ENCODE measurements at regions of chr13 and their contacts with region 1.

Region 1: GRCh38 chr13:107650081-107650701 is 565.1 kb downstream of the LIG4 start:
- DNase-seq: peak; percentile 64 to 76
- H3K4me3 ChIP-seq: no peak overlapping the region
- H3K4me3 Mint-ChIP-seq: no peak overlapping the region
- H3K27ac Mint-ChIP-seq: no peak overlapping the region
- H3K4me1 ChIP-seq: no peaks in the 10 kb centered on the region
- H3K4me1 Mint-ChIP-seq: no peaks in the 10 kb centered on the region
- H3K27me3 ChIP-seq: no peaks in the 10 kb centered on the region
- H3K27me3 Mint-ChIP-seq: peaks cover 14% of the 10 kb centered on the region
- CTCF ChIP-seq: peak; percentile 92 to 99

Region 2: GRCh38 chr13:107373551-107373950 is 276.6 kb before region 1 on chr13:
- CTCF ChIA-PET with region 1: no interaction called
- POLR2A ChIA-PET with region 1: no interaction called
- intact Hi-C with region 1: loop called (anchors 2 kb)
- DNase-seq: peak in 1 of 2 experiments; percentile 11
- H3K4me3 ChIP-seq: no peak overlapping the region
- H3K4me3 Mint-ChIP-seq: no peak overlapping the region
- H3K27ac Mint-ChIP-seq: no peak overlapping the region
- H3K4me1 ChIP-seq: no peaks in the 10 kb centered on the region
- H3K4me1 Mint-ChIP-seq: no peaks in the 10 kb centered on the region
- H3K27me3 ChIP-seq: no peaks in the 10 kb centered on the region
- H3K27me3 Mint-ChIP-seq: peaks cover 14% of the 10 kb centered on the region
- CTCF ChIP-seq: peak; percentile 44 to 74

Region 3: DNA sequence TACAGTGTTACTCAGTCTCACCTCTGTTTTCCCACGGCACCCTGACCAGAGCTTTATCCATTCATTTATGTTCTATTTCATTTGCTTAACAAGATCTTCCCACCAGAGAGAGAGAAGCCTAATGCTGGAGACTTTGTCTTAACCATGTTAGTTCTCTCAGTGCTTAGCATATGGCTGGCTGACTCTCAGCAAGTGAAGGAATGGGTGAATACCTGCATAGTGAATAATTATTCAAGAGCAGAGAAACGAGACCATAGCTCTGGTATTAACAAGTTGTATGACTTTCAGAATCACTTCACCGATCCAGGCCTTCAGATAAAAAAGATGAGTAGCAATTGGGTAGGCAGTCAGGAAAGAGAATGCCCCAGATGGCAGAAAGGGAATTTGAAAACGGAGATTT is 121.2 kb before region 1 on chr13:
- CTCF ChIA-PET with region 1: no interaction called
- POLR2A ChIA-PET with region 1: no interaction called
- intact Hi-C with region 1: no loop called
- DNase-seq: no peak
- H3K4me3 ChIP-seq: no peak overlapping the region
- H3K4me3 Mint-ChIP-seq: no peak overlapping the region
- H3K27ac Mint-ChIP-seq: no peak overlapping the region
- H3K4me1 ChIP-seq: no peaks in the 10 kb centered on the region
- H3K4me1 Mint-ChIP-seq: no peaks in the 10 kb centered on the region
- H3K27me3 ChIP-seq: no peaks in the 10 kb centered on the region
- H3K27me3 Mint-ChIP-seq: peaks cover 3% of the 10 kb centered on the region
- CTCF ChIP-seq: no peak

Region 4: GRCh38 chr13:107600971-107601370 is 49.2 kb before region 1 on chr13:
- CTCF ChIA-PET with region 1: no interaction called
- POLR2A ChIA-PET with region 1: no interaction called
- intact Hi-C with region 1: no loop called
- DNase-seq: no peak
- H3K4me3 ChIP-seq: no peak overlapping the region
- H3K4me3 Mint-ChIP-seq: no peak overlapping the region
- H3K27ac Mint-ChIP-seq: no peak overlapping the region
- H3K4me1 ChIP-seq: no peaks in the 10 kb centered on the region
- H3K4me1 Mint-ChIP-seq: no peaks in the 10 kb centered on the region
- H3K27me3 ChIP-seq: no peaks in the 10 kb centered on the region; the same call in 1 of the 2 replicates
- H3K27me3 Mint-ChIP-seq: peaks cover 9% of the 10 kb centered on the region
- CTCF ChIP-seq: no peak

Region 5: GRCh38 chr13:107617527-107617926 is 32.7 kb before region 1 on chr13:
- CTCF ChIA-PET with region 1: no interaction called
- POLR2A ChIA-PET with region 1: no interaction called
- intact Hi-C with region 1: no loop called
- DNase-seq: no peak
- H3K4me3 ChIP-seq: no peak overlapping the region
- H3K4me3 Mint-ChIP-seq: no peak overlapping the region
- H3K27ac Mint-ChIP-seq: no peak overlapping the region
- H3K4me1 ChIP-seq: no peaks in the 10 kb centered on the region
- H3K4me1 Mint-ChIP-seq: no peaks in the 10 kb centered on the region
- H3K27me3 ChIP-seq: no peaks in the 10 kb centered on the region
- H3K27me3 Mint-ChIP-seq: peaks cover 6% of the 10 kb centered on the region
- CTCF ChIP-seq: no peak

Measured in Caco-2 (cell line).